HAP-1 (cell line): ENCODE measurements at regions of chr12 and their contacts with region 1.

Region 1: GRCh38 chr12:44930972-44931600 is 55.0 kb upstream of the NELL2 start:
- DNase-seq: peak in 1 of 2 experiments; percentile 80
- H3K4me3 ChIP-seq: no peak overlapping the region
- H3K4me1 ChIP-seq: peaks cover 6% of the 10 kb centered on the region
- H3K27me3 ChIP-seq: no peaks in the 10 kb centered on the region

Region 2: GRCh38 chr12:44015335-44015941 is 915.6 kb before region 1 on chr12:
- in situ Hi-C with region 1: loop called (anchors 25 kb)
- DNase-seq: peak in 1 of 2 experiments; percentile 51
- H3K4me3 ChIP-seq: no peak overlapping the region
- H3K4me1 ChIP-seq: no peaks in the 10 kb centered on the region
- H3K27me3 ChIP-seq: no peaks in the 10 kb centered on the region

Region 3: DNA sequence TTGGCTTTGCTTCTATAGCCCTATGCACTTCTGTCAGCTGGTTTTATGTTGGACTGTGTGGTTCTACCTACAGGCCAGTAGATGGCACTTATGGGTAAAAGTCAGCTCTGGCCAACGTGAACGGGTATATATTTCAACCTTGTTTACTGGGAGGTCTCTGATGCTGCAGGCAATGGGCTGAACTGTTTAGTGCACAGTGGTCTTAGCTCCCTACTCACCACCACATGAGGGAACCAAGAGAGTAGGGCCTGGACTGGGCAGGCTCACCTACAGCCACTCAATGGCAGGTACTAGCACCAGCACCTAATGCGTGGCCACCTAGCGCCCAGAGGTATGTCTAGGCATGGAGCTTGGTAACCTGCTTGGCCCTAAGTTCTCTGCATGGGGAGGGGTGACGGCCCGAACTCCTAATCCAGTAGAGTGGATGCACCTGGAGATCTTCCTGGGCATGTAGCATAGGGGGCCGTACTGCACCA is 613.4 kb before region 1 on chr12:
- in situ Hi-C with region 1: loop called (anchors 25 kb)
- DNase-seq: peak; percentile 18 to 37
- H3K4me3 ChIP-seq: no peak overlapping the region
- H3K4me1 ChIP-seq: no peaks in the 10 kb centered on the region
- H3K27me3 ChIP-seq: no peaks in the 10 kb centered on the region

Region 4: DNA sequence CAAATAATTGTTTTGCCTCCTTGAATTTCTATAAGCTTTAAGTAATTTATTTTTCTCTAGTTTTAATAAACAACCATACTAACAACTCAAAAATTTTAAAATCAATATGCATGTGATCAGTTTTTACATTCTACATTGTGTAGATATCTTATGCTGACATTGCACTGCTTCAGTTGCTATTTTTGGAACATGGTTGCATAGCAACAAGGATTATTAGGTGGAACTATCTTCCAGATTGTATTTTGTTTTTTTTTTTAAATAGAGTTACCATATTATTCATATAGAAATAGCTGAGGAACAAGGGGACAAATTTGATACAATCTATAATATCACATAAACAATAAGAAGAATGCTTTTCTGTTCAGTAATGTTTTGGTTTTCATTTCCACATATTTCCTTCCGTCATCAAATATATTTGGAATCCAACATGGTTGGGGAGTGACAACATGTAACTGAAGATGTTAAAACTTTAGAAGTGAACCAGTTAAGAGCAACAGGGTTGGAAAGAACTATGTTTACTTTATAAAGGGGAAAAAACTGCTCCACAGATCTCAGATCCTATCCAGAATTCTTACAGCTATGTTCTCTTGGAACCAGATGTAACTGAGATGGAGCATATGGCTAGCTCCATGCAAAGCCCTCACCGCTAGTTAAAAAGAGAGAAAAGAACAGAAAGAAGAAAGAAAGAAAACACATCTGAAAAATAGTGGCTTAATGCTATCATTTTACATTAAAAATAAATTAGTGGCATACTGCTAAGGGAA is 290.5 kb before region 1 on chr12:
- in situ Hi-C with region 1: no loop called
- DNase-seq: no peak
- H3K4me3 ChIP-seq: no peak overlapping the region
- H3K4me1 ChIP-seq: no peaks in the 10 kb centered on the region
- H3K27me3 ChIP-seq: no peaks in the 10 kb centered on the region